ENCODE measurements at regions of chr5 and their contacts with region 1.

Region 1: GRCh38 chr5:53170748-53171349 is 61.3 kb upstream of the MOCS2 start:
- DNase-seq: peak; percentile 63
- H3K4me3 Mint-ChIP-seq: no peak overlapping the region
- H3K27ac Mint-ChIP-seq: no peak overlapping the region
- H3K4me1 Mint-ChIP-seq: peaks cover 5% of the 10 kb centered on the region
- H3K27me3 Mint-ChIP-seq: no peaks in the 10 kb centered on the region
- CTCF ChIP-seq: peak; percentile 77

Region 2: DNA sequence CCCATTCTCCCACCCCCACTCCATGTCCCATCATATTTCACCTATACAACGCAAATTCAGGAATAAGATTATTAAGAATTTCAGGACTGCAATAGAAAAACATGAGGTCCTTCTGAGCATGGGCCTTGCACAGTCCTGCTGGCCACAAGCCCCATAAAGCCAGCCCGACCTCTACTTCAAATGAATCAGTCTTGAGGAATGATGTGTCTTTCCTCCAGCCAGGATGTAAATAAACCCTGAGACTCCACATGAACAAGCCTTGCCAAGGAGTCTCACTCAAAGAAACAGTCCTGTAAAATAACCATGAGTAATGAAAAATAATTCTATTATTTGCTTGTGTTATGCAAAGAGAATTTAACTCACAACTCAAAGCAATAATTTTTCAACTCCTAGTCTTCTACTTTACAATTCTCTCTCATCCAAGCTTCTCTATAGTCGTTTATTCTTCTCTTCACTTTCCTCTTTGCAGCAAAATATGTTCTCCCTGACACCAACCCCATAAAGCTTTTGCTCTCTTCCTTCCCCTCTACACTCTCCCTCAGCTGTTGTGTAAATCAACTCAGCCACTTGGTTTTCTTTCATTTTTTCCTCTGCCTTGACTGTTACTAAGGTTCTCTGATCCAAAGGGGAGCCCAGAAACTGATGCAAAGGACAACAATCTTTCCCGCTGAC is 78.8 kb after region 1 on chr5:
- CTCF ChIA-PET with region 1: interaction called, 5 read pairs
- POLR2A ChIA-PET with region 1: interaction called, 3 read pairs
- intact Hi-C with region 1: loop called (anchors 5 kb)
- DNase-seq: peak; percentile 65
- H3K4me3 Mint-ChIP-seq: no peak overlapping the region
- H3K27ac Mint-ChIP-seq: peak overlapping the region; percentile 41
- H3K4me1 Mint-ChIP-seq: peaks cover 38% of the 10 kb centered on the region
- H3K27me3 Mint-ChIP-seq: no peaks in the 10 kb centered on the region
- CTCF ChIP-seq: no peak

Region 3: DNA sequence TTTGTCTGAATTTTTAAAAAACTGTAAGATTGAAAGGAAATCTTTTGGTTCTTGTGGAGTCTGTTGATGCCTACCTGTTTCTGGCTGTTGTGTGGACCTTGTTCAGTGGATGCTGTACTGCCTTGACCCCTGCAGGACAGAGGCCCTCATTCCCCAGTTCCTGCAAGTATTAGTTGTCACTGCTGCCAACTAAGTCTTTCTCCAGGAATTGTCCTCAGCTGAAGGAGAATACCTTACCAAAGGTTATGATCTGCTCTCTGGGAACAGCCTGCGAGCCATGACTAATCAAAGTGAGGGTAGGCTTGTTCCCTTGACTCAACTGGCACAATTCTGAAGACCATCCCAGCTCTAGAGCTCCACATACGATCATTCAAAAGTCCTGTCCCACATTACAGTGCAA is 164.3 kb after region 1 on chr5:
- CTCF ChIA-PET with region 1: no interaction called
- POLR2A ChIA-PET with region 1: no interaction called
- intact Hi-C with region 1: loop called (anchors 1 kb)
- DNase-seq: peak; percentile 49
- H3K4me3 Mint-ChIP-seq: no peak overlapping the region
- H3K27ac Mint-ChIP-seq: no peak overlapping the region
- H3K4me1 Mint-ChIP-seq: peaks cover 34% of the 10 kb centered on the region
- H3K27me3 Mint-ChIP-seq: no peaks in the 10 kb centered on the region
- CTCF ChIP-seq: peak; percentile 15

Region 4: GRCh38 chr5:54229041-54229780 is 1058.4 kb after region 1 on chr5:
- CTCF ChIA-PET with region 1: interaction called, 28 read pairs
- POLR2A ChIA-PET with region 1: no interaction called
- intact Hi-C with region 1: loop called (anchors 2 kb)
- DNase-seq: peak; percentile 67
- H3K4me3 Mint-ChIP-seq: no peak overlapping the region
- H3K27ac Mint-ChIP-seq: no peak overlapping the region
- H3K4me1 Mint-ChIP-seq: peaks cover 6% of the 10 kb centered on the region
- H3K27me3 Mint-ChIP-seq: no peaks in the 10 kb centered on the region
- CTCF ChIP-seq: peak; percentile 74

Measured in MCF 10A (cell line).